Activated CD4-positive, alpha-beta memory T cell treated with anti-CD3 and anti-CD28 coated beads for 36 hours (primary cell): ENCODE measurements at regions of chr1 and their contacts with region 1.

Region 1: GRCh38 chr1:248686815-248687214 is 15.8 kb downstream of the OR14I1 start:
- DNase-seq: peak; percentile 28
- H3K4me3 Mint-ChIP-seq: no peak overlapping the region
- H3K27ac Mint-ChIP-seq: no peak overlapping the region
- H3K4me1 Mint-ChIP-seq: peaks cover 3% of the 10 kb centered on the region
- H3K27me3 Mint-ChIP-seq: peaks cover 4% of the 10 kb centered on the region

Region 2: GRCh38 chr1:248622570-248623001 is 64.2 kb before region 1 on chr1:
- CTCF ChIA-PET with region 1: interaction called, 6 read pairs
- POLR2A ChIA-PET with region 1: no interaction called
- intact Hi-C with region 1: loop called (anchors 1 kb)
- DNase-seq: no peak
- H3K4me3 Mint-ChIP-seq: no peak overlapping the region
- H3K27ac Mint-ChIP-seq: no peak overlapping the region
- H3K4me1 Mint-ChIP-seq: peaks cover 2% of the 10 kb centered on the region
- H3K27me3 Mint-ChIP-seq: no peaks in the 10 kb centered on the region